ENCODE measurements at regions of chr15 and their contacts with region 1.

Region 1: DNA sequence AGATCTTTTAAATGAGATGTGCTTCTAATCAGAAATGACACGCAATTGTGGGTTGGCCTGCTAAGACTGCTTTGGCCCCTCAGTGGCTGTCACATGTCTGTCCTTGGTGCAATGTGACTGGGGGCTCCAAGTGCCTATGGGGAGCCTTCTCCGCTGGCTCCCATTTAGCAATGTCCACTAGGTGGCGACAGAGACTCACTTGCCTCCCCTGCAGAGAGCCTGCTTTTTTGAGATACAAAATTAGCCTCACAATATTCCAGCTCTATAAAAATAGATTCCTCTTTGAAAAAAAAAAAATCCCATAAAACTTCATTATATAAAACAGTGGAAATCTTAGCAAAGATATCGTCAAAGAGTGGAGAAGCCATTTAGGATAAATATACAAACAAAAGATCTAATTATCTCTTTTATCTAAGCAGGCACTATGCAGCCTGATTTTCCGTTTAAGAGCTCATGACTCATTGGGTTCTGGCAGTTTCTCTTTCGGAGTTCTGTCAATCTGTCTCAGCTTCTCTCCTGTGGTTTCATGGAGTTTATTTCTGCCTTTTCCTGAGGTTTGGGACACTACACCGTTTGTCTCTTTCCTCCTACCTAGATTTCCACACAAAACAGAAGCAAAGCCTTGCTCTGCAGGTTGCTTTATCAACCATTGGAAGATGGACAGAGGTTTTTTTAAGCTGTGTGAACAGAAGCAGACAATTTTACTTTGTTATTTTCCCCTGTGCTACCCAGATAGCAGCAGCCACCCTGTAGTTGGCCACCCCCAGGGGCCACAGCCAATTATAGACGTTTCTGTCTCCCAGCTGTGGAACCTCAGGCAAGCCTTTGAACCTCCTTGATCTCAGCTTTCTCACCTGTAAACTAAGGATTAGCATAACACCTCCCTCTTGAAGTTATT is 68.4 kb upstream of the TNFAIP8L3 start:
- DNase-seq: peak; percentile 76
- ATAC-seq: peak; percentile 93
- H3K4me3 Mint-ChIP-seq: no peak overlapping the region
- H3K27ac Mint-ChIP-seq: no peak overlapping the region
- H3K4me1 Mint-ChIP-seq: peaks cover 11% of the 10 kb centered on the region
- H3K27me3 Mint-ChIP-seq: no peaks in the 10 kb centered on the region
- CTCF ChIP-seq: peak; percentile 91

Region 2: GRCh38 chr15:50880651-50881114 is 282.4 kb before region 1 on chr15:
- CTCF ChIA-PET with region 1: no interaction called
- POLR2A ChIA-PET with region 1: no interaction called
- DNase-seq: no peak
- ATAC-seq: no peak
- H3K4me3 Mint-ChIP-seq: no peak overlapping the region
- H3K27ac Mint-ChIP-seq: no peak overlapping the region
- H3K4me1 Mint-ChIP-seq: no peaks in the 10 kb centered on the region
- H3K27me3 Mint-ChIP-seq: peaks cover 6% of the 10 kb centered on the region
- CTCF ChIP-seq: no peak

Region 3: DNA sequence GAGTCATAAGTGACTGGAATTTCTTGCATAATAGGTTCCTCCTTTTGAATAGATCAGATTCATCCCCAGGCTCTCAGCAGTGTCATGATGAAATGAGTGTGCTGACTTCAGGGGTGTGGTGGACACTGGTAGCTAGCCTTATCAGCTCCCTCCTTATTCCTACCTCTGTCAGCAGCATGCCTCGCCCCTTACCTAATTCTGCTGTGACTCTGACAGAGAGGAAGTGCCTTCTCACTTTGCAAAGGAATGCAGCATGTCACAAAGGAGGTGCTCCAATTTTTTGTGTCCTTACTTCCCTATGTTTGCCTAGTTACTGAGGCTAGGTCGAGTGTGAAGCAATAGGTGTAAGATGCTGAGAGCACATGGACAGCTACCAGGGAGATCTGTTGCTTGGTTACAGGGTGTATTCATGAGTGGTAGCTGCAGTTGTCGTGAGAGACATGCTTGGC is 159.0 kb before region 1 on chr15:
- CTCF ChIA-PET with region 1: no interaction called
- POLR2A ChIA-PET with region 1: no interaction called
- DNase-seq: no peak
- ATAC-seq: peak; percentile 90
- H3K4me3 Mint-ChIP-seq: no peak overlapping the region
- H3K27ac Mint-ChIP-seq: no peak overlapping the region
- H3K4me1 Mint-ChIP-seq: peaks cover 4% of the 10 kb centered on the region
- H3K27me3 Mint-ChIP-seq: no peaks in the 10 kb centered on the region
- CTCF ChIP-seq: no peak

Region 4: GRCh38 chr15:51038166-51038963 is 124.7 kb before region 1 on chr15:
- CTCF ChIA-PET with region 1: no interaction called
- POLR2A ChIA-PET with region 1: no interaction called
- DNase-seq: no peak
- ATAC-seq: no peak; the same call in 1 of the 2 replicates
- H3K4me3 Mint-ChIP-seq: peak overlapping the region; percentile 78
- H3K27ac Mint-ChIP-seq: peak overlapping the region; percentile 90; the same call in 1 of the 2 replicates
- H3K4me1 Mint-ChIP-seq: peaks cover 33% of the 10 kb centered on the region
- H3K27me3 Mint-ChIP-seq: no peaks in the 10 kb centered on the region
- CTCF ChIP-seq: no peak

Region 5: DNA sequence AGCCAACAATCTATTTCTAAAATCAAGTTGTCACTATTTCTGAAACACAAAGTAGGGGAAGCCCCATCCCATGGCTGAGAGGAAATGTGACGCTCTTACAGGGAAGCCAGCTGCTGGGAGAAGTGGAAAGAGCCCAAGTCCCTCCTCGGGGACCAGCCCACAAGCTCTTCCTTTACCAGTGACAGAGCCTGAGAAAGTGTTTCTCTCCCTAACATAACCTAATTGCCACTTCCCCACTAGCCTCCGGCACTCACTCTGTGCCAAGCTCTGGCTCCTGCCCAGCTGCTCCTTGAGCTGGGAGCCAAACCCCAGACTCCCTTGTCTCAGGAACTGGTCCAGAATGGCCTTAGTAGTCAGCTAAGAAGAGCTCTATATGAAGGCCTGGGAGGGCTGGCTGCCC is 111.3 kb before region 1 on chr15:
- CTCF ChIA-PET with region 1: no interaction called
- POLR2A ChIA-PET with region 1: no interaction called
- DNase-seq: no peak
- ATAC-seq: no peak
- H3K4me3 Mint-ChIP-seq: no peak overlapping the region
- H3K27ac Mint-ChIP-seq: no peak overlapping the region
- H3K4me1 Mint-ChIP-seq: peaks cover 39% of the 10 kb centered on the region
- H3K27me3 Mint-ChIP-seq: no peaks in the 10 kb centered on the region
- CTCF ChIP-seq: no peak

Region 6: DNA sequence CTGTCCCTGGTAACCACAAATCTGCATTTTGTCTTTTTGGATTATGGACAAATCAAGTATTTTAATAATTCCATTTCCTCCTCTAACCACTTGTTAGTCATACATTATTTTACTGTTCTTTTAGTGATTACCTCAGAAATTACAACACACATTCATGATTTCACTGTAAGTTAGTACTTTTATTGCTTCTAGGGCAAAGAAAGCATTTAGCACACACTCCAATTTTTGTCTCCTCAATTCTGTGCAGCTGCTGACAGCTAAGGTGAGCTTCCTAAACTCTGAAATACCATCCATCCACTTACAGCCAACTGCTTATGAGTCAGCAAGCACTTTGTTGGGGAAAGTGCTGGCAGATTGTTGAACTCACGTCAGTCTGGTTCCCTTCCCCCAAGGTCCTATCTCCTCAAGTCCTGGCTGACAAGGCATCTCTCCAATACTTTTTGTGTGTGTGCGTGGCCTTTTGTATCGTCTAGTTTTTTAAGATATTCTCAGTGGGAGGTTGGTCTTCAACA is 19.0 kb before region 1 on chr15:
- CTCF ChIA-PET with region 1: interaction called, 21 read pairs
- POLR2A ChIA-PET with region 1: no interaction called
- DNase-seq: no peak
- ATAC-seq: no peak
- H3K4me3 Mint-ChIP-seq: no peak overlapping the region
- H3K27ac Mint-ChIP-seq: no peak overlapping the region
- H3K4me1 Mint-ChIP-seq: 0 out of 2 replicates have a peak, but pooled peaks cover 6% of the 10 kb centered on the region
- H3K27me3 Mint-ChIP-seq: no peaks in the 10 kb centered on the region
- CTCF ChIP-seq: no peak

Region 7: GRCh38 chr15:51192521-51193280 is 29.6 kb after region 1 on chr15:
- CTCF ChIA-PET with region 1: interaction called, 103 read pairs
- POLR2A ChIA-PET with region 1: interaction called, 4 read pairs
- DNase-seq: peak; percentile 98
- ATAC-seq: peak; percentile 97
- H3K4me3 Mint-ChIP-seq: no peak overlapping the region
- H3K27ac Mint-ChIP-seq: no peak overlapping the region
- H3K4me1 Mint-ChIP-seq: peaks cover 20% of the 10 kb centered on the region
- H3K27me3 Mint-ChIP-seq: no peaks in the 10 kb centered on the region; the same call in 1 of the 2 replicates
- CTCF ChIP-seq: peak; percentile 96

Region 8: DNA sequence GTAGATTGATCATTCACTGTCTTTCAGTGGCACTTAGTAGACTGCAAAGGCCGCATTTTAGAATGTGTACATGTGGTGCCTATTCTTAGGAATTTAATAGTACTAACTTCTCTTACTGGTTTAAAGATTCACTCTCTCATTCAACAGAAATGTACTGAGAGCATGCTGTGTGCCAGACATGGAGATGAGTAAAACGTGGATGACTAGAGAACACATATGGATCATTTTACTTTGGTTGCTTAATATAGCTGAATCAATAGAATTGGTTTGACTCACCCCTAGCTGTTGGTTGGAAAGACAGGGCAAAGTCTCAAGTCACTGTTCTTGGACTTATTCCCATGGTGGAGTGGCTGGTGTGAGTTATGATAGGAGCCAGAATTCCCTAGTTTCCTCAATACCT is 40.7 kb after region 1 on chr15:
- CTCF ChIA-PET with region 1: interaction called, 15 read pairs
- POLR2A ChIA-PET with region 1: no interaction called
- DNase-seq: no peak
- ATAC-seq: no peak
- H3K4me3 Mint-ChIP-seq: no peak overlapping the region
- H3K27ac Mint-ChIP-seq: no peak overlapping the region
- H3K4me1 Mint-ChIP-seq: peaks cover 10% of the 10 kb centered on the region
- H3K27me3 Mint-ChIP-seq: no peaks in the 10 kb centered on the region
- CTCF ChIP-seq: no peak

Region 9: GRCh38 chr15:51267703-51268083 is 104.6 kb after region 1 on chr15:
- CTCF ChIA-PET with region 1: interaction called, 14 read pairs
- POLR2A ChIA-PET with region 1: no interaction called
- DNase-seq: peak; percentile 29
- ATAC-seq: peak; percentile 69
- H3K4me3 Mint-ChIP-seq: peak overlapping the region; percentile 69
- H3K27ac Mint-ChIP-seq: no peak overlapping the region
- H3K4me1 Mint-ChIP-seq: peaks cover 9% of the 10 kb centered on the region
- H3K27me3 Mint-ChIP-seq: peaks cover 4% of the 10 kb centered on the region
- CTCF ChIP-seq: no peak

Region 10: DNA sequence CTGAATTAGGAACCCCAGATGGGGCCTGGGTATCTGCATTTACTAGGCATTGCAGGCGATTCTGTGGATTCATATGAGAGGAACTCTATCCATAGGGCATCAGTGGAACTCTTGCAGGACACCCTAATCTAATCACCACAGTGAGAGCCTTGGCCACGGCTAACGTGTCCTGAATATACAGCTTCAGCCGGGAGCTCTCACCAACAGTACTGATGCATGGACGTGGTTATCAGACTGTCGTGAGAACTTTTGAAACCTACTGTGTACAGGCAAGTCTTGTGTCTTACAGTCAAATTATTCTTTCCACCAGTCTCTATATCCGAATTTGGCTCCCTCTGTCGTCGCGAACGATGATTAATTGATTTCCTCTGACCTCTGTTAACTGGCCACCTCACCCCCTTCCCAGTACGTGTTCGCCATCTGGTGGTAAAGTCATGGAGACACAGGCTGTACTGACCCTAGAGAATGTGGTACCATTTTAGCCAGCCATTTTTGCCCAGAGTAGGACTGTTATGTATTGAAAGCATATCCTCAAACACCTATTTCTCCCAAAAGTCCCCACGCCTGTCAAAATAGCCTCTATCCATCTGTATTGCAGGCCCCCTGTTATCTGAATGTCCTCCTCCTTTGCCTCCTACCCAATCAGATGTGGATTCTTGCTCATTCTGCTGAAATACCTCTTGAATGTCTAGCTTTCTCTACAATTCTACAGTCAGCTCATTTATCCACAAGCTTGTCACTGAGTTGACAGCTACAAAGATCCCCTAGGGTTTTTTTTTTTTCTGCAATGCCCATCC is 218.1 kb after region 1 on chr15:
- CTCF ChIA-PET with region 1: interaction called, 40 read pairs
- POLR2A ChIA-PET with region 1: no interaction called
- DNase-seq: peak; percentile 60
- ATAC-seq: peak; percentile 93
- H3K4me3 Mint-ChIP-seq: no peak overlapping the region
- H3K27ac Mint-ChIP-seq: no peak overlapping the region
- H3K4me1 Mint-ChIP-seq: peaks cover 4% of the 10 kb centered on the region
- H3K27me3 Mint-ChIP-seq: peaks cover 2% of the 10 kb centered on the region; the same call in 1 of the 2 replicates
- CTCF ChIP-seq: peak; percentile 80

Measured in WTC11 (cell line).